Aorta (tissue), 5 donors: ENCODE measurements at regions of chr13 and their contacts with region 1.

Region 1: DNA sequence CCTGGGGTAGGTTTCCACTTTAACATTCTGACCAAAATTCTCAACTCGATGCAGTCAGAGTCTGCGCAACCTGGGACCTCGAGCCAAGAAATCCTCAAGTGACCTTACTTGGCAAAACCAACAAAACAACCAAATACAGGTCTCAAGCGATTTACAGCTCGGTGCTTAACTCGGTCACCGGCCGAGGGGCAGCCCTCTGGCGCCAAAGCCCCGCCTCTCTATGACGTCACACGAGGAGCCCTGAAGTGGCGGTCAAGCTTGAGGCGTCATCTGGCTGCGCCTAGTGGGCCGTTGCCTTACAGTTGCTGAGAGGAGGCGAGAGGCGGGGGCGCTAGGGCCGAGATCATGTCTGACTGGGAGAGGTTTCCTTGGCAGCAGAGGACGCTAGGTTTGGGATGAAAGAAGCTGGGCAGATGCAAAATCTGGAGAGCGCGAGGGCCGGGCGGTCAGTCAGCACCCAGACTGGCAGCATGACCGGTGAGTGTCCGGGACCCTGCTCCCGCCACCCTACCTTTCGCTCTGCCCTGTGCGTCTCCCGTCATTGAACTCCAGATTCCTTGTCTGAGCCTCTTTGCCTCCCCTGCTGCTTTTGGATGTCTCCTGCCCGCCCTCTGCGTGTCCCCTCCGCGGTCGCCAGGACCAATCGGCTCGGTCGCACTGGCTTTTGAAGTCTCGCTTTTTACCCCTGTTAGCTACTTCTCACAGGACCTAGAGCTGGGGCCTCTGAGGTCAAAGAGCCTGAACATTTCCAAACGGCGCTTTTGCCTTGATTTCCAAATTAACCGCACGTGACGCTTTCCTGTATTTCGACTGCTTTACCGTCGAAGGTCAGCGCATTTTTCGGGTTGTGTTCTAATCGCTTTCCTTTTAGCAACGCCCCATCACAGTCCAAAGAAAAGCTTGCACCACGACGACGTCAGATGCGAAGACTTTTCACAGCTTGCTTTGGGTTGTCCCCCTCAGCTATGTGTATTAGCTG is at the start of gene CDADC1:
- DNase-seq: peak; percentile 99 to 100
- ATAC-seq: peak; percentile 98
- H3K4me3 ChIP-seq: peak within 1 kb of the TSS; percentile 55 to 77
- H3K27ac ChIP-seq: peak within 1 kb of the TSS; percentile 76 to 90
- H3K4me1 ChIP-seq: peaks cover 2% of the 10 kb centered on the region in 2 donors
- H3K27me3 ChIP-seq: no peaks in the 10 kb centered on the region
- total RNA-seq, gene CDADC1: 9.9 to 13.8 TPM

Region 2: DNA sequence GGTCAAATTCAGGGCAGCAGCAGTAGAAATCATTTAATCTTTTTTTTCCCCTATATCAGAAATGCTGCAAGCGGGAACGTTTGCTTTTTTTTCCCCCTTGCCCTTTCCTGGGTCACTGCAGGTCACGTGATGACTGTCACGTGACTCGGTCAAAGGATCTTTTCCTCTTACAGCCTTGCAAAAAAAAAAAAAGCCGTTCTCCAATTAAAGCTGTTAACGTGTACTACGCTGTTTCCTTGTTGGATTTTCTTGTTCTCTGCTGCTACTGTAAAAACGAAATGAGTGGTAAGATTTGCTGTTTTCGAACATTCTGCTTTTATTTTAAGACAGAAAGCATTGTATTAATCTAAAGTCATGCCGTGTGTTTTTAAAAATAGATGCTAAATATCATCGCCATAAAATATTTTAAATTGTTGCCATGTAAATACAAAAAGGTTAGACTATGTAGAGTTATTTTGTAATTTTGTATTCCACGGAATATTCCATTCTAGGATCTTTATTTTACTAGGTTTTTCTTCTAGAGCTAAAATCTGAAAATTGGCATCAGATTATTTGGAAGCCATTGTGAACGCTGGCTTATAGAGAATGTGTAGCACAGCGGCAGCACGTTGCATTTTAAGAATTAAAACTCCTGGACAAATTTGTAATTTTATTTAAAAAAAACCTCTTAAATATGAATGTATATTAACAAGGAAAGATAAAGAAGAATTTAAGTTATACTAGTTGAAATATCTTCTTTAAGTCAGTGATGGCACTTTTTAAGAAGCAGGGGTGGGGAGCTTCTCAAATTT is 137.6 kb before region 1 on chr13:
- intact Hi-C with region 1: loop called in 1 of 2 experiments (anchors 10 kb)
- DNase-seq: peak; percentile 87 to 90
- ATAC-seq: peak; percentile 77
- H3K4me3 ChIP-seq: peak overlapping the region; percentile 54 to 79
- H3K27ac ChIP-seq: no peak overlapping the region
- H3K4me1 ChIP-seq: no peaks in the 10 kb centered on the region
- H3K27me3 ChIP-seq: no peaks in the 10 kb centered on the region

Region 3: GRCh38 chr13:49214917-49215376 is 33.0 kb before region 1 on chr13:
- intact Hi-C with region 1: no loop called
- DNase-seq: peak in 1 of 2 donors; percentile 69
- ATAC-seq: peak; percentile 42
- H3K4me3 ChIP-seq: no peak overlapping the region
- H3K27ac ChIP-seq: no peak overlapping the region
- H3K4me1 ChIP-seq: no peaks in the 10 kb centered on the region
- H3K27me3 ChIP-seq: no peaks in the 10 kb centered on the region

Region 4: GRCh38 chr13:49436890-49437289 is 189.0 kb after region 1 on chr13:
- intact Hi-C with region 1: no loop called
- DNase-seq: peak; percentile 70 to 76
- ATAC-seq: peak; percentile 85
- H3K4me3 ChIP-seq: no peak overlapping the region
- H3K27ac ChIP-seq: no peak overlapping the region
- H3K4me1 ChIP-seq: no peaks in the 10 kb centered on the region
- H3K27me3 ChIP-seq: no peaks in the 10 kb centered on the region